ENCODE measurements at regions of chr7 and their contacts with region 1.

Region 1: GRCh38 chr7:152436111-152436930 is 518 bp upstream of the KMT2C start:
- DNase-seq: peak; percentile 92 to 94
- H3K4me3 ChIP-seq: peak overlapping the region; percentile 52 to 95 (median 95)
- H3K27ac ChIP-seq: peak overlapping the region; percentile 98 to 100
- H3K4me1 ChIP-seq: peaks cover 0 to 6% of the 10 kb centered on the region in 2 donors
- H3K27me3 ChIP-seq: no peaks in the 10 kb centered on the region
- CTCF ChIP-seq: no peak
- POLR2A ChIP-seq: no peak

Region 2: DNA sequence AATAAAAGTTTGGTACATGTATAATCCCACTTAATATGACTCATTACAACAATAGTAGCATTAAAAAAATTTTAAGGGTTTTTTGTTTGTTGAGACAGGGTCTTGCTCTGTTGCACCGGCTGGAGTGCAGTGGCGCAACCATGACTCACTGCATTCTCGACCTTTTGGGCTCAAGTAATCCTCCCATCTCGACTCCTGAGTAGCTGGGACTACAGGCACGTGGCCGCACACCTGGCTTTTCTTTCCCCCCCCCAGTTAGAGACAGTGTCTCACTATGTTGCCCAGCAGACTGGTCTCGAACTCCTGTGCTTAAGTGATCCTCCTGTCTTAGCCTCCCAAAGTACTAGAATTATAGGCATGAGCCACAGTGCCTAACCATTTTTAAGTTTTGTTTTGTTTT is 41.2 kb before region 1 on chr7:
- intact Hi-C with region 1: no loop called
- DNase-seq: no peak
- H3K4me3 ChIP-seq: no peak overlapping the region
- H3K27ac ChIP-seq: no peak overlapping the region
- H3K4me1 ChIP-seq: no peaks in the 10 kb centered on the region
- H3K27me3 ChIP-seq: no peaks in the 10 kb centered on the region
- CTCF ChIP-seq: no peak
- POLR2A ChIP-seq: no peak

Region 3: GRCh38 chr7:152423991-152424347 is 12.4 kb before region 1 on chr7:
- intact Hi-C with region 1: loop called (anchors 2 kb)
- DNase-seq: no peak
- H3K4me3 ChIP-seq: no peak overlapping the region
- H3K27ac ChIP-seq: no peak overlapping the region
- H3K4me1 ChIP-seq: no peaks in the 10 kb centered on the region
- H3K27me3 ChIP-seq: no peaks in the 10 kb centered on the region
- CTCF ChIP-seq: no peak
- POLR2A ChIP-seq: no peak

Region 4: DNA sequence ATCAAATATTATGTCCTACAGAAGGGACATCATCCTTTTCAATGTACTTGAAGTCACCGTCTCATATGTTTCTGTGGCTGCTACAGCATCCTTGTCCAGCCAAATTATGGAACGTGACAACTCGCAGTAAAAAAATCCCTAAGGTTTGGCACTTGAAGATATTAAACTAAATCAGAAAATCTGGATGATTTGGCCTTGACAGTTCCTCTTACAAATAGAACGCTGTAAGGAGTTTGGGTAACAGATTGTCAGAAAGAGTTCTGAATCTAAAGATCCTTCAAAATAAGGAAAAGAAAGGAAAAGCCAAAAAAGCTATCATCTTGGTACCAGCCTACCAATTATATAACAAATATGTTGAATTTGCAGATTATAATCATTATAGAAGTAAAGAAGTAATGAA is 218.7 kb after region 1 on chr7:
- intact Hi-C with region 1: no loop called
- DNase-seq: no peak
- H3K4me3 ChIP-seq: no peak overlapping the region
- H3K27ac ChIP-seq: no peak overlapping the region
- H3K4me1 ChIP-seq: no peaks in the 10 kb centered on the region
- H3K27me3 ChIP-seq: no peaks in the 10 kb centered on the region
- CTCF ChIP-seq: no peak
- POLR2A ChIP-seq: no peak

Measured in breast epithelium (tissue), 4 donors.